Left ventricle myocardium inferior (tissue), 1 donor: ENCODE measurements at regions of chr9 and their contacts with region 1.

Region 1: GRCh38 chr9:108272349-108272899 is 583.4 kb downstream of the ACTL7B start:
- DNase-seq: peak; percentile 40
- H3K4me3 ChIP-seq: peak overlapping the region; percentile 30
- H3K27ac ChIP-seq: peak overlapping the region; percentile 46
- H3K4me1 ChIP-seq: peaks cover 12% of the 10 kb centered on the region
- H3K27me3 ChIP-seq: no peaks in the 10 kb centered on the region
- CTCF ChIP-seq: peak; percentile 75

Region 2: DNA sequence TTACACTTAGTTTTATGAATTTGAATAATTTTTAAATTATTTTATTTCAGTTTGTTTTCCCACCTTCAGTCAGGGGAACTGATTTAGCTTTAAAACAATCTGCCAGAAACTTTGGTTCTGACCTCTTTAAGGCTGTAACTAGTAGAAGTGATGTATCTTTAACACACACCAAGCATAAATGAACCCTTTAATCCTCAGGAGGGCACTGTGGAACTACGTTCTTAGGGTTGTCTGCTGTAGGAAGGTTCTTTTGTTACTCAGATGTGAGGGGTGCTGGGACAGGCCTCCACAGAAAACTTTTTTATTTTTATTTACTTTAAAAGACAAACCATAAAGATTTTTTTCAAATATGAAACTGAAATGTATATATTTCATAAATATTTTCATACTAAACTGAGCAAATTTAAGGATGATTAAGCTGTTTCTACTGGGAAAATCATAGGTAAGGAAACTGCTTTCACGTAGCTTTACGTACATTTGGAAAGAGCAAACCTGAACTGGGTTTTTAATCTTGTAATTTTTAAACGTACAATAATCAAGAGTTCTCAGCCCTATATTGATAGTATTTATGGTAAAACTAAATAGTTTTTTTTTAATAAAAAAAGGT is 788.2 kb before region 1 on chr9:
- intact Hi-C with region 1: loop called (anchors 5 kb)
- DNase-seq: no peak
- H3K4me3 ChIP-seq: peak overlapping the region; percentile 77
- H3K27ac ChIP-seq: peak overlapping the region; percentile 98
- H3K4me1 ChIP-seq: peaks cover 44% of the 10 kb centered on the region
- H3K27me3 ChIP-seq: no peaks in the 10 kb centered on the region
- CTCF ChIP-seq: peak; percentile 72

Region 3: GRCh38 chr9:108322326-108323098 is 50.1 kb after region 1 on chr9:
- intact Hi-C with region 1: no loop called
- DNase-seq: no peak
- H3K4me3 ChIP-seq: no peak overlapping the region
- H3K27ac ChIP-seq: no peak overlapping the region
- H3K4me1 ChIP-seq: no peaks in the 10 kb centered on the region
- H3K27me3 ChIP-seq: no peaks in the 10 kb centered on the region
- CTCF ChIP-seq: no peak

Region 4: DNA sequence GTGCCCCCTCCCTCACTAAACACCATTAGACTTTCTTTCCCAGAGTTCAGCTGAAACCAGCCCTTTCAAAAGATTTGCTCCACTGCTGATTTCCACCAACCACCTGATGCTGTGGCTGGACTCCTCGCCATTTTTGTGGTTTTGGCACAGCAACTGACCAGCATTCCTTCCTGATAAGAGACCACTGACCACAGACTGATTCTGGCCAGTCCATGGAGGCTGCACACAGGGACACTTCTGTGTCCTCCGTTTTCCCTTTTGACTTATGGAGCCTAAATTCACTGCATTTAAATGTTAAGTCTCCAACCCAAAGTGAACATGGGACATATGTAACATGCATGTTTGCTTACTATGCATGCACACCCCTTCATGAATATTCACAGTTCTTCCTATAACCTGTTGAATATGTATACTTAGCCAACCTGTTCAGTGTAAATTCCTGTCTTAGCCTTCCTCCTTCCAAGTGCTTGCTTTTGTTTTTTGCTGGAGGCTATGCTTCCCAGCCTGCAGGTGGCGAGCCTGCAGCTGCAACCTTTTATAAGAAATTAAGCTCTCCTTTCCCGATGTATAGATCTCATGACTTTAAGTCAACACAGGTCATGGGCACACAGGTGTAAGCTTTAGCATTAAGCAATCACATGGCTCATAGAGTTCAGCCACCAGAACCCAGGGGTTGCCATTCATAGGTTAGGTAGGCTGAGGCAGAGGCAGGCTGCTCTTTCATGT is 504.7 kb after region 1 on chr9:
- intact Hi-C with region 1: no loop called
- DNase-seq: no peak
- H3K4me3 ChIP-seq: no peak overlapping the region
- H3K27ac ChIP-seq: peak overlapping the region; percentile 26
- H3K4me1 ChIP-seq: peaks cover 12% of the 10 kb centered on the region
- H3K27me3 ChIP-seq: peaks cover 31% of the 10 kb centered on the region
- CTCF ChIP-seq: peak; percentile 19